ENCODE measurements at regions of chr6 and their contacts with region 1.

Region 1: DNA sequence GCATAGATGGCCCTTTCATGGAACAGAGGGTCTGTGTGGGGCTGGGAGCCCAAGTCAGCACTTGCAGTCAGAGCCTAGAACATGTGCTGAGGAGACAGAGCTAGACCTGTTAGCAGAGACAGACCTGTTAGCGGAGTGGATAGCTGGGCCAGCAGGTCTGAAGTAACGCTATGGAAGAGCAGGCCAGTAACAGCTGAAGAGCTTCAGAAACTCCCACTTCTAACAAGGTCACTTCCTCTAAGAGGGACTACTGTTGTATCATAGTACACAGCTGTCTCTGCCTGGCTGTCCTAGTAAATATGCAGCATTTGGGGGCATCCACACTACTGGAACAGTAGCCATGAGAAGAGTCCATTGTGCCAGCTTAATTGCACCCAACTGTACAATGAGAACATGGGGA is 41.2 kb upstream of the POLR1H start:
- DNase-seq: no peak
- H3K4me3 ChIP-seq: no peak overlapping the region
- H3K27ac ChIP-seq: no peak overlapping the region
- H3K4me1 ChIP-seq: no peaks in the 10 kb centered on the region
- H3K27me3 ChIP-seq: no peaks in the 10 kb centered on the region
- CTCF ChIP-seq: no peak
- EP300 ChIP-seq: no peak
- POLR2A ChIP-seq: no peak

Region 2: GRCh38 chr6:29850011-29850553 is 169.7 kb before region 1 on chr6:
- intact Hi-C with region 1: loop called (anchors 5 kb)
- DNase-seq: peak; percentile 17 to 53
- H3K4me3 ChIP-seq: peak overlapping the region in 3 of 4 donors; percentile 9 to 41 (median 23)
- H3K27ac ChIP-seq: no peak overlapping the region
- H3K4me1 ChIP-seq: peaks cover 4 to 10% (median 6%) of the 10 kb centered on the region in 4 donors
- H3K27me3 ChIP-seq: peaks cover 0 to 64% (median 17%) of the 10 kb centered on the region in 3 donors
- CTCF ChIP-seq: no peak
- EP300 ChIP-seq: no peak
- POLR2A ChIP-seq: no peak

Region 3: GRCh38 chr6:30272017-30272416 is 252.2 kb after region 1 on chr6:
- intact Hi-C with region 1: no loop called
- DNase-seq: no peak
- H3K4me3 ChIP-seq: no peak overlapping the region
- H3K27ac ChIP-seq: no peak overlapping the region
- H3K4me1 ChIP-seq: no peaks in the 10 kb centered on the region
- H3K27me3 ChIP-seq: no peaks in the 10 kb centered on the region
- CTCF ChIP-seq: no peak
- EP300 ChIP-seq: no peak
- POLR2A ChIP-seq: no peak

Measured in stomach (tissue), 19 donors.